ENCODE measurements at regions of chr19 and their contacts with region 1.

Region 1: DNA sequence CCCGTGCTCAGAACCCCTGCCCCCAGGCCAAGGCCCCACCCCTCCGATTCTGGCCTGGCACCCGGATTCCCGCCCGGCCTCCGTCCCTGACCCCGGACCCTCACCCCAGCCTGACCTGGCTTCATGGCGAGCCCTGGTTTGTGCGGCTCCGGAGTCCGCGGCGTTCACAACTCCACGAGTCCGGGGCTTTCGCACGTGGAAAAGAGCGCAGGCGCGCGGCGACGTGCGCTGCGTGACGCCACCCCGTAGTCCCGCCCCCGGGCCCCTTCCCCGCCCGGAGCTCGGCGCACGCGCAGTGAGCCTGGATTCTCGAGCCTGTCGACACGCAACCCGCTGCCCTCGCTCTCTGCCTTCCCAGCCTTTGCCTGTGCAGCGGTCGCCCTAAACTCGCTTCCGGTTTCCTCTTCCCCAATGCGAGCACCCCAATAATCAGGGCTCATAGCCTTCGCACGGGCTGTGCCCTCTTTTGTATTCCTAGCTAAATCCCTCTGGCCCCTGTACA is at the start of gene FBL:
- DNase-seq: peak; percentile 92 to 100 (median 97)
- ATAC-seq: peak; percentile 93 to 94
- H3K4me3 Mint-ChIP-seq: peak within 1 kb of the TSS; percentile 88 to 94 (median 92)
- H3K27ac Mint-ChIP-seq: peak within 1 kb of the TSS; percentile 86 to 99 (median 97)
- H3K4me1 Mint-ChIP-seq: peaks cover 35 to 52% (median 49%) of the 10 kb centered on the region in 4 donors
- H3K27me3 Mint-ChIP-seq: no peaks in the 10 kb centered on the region
- polyA plus RNA-seq, gene FBL: 231 to 246 (median 236) TPM

Region 2: GRCh38 chr19:39759457-39760184 is 86.6 kb before region 1 on chr19:
- POLR2A ChIA-PET with region 1: no interaction called
- DNase-seq: no peak
- ATAC-seq: no peak
- H3K4me3 Mint-ChIP-seq: no peak overlapping the region
- H3K27ac Mint-ChIP-seq: no peak overlapping the region
- H3K4me1 Mint-ChIP-seq: no peaks in the 10 kb centered on the region
- H3K27me3 Mint-ChIP-seq: peaks cover 11 to 40% (median 29%) of the 10 kb centered on the region in 5 donors

Region 3: GRCh38 chr19:39816287-39817048 is 29.8 kb before region 1 on chr19:
- POLR2A ChIA-PET with region 1: no interaction called
- DNase-seq: no peak
- ATAC-seq: no peak
- H3K4me3 Mint-ChIP-seq: no peak overlapping the region
- H3K27ac Mint-ChIP-seq: peak overlapping the region in 4 of 10 donors; percentile 17 to 65 (median 36)
- H3K4me1 Mint-ChIP-seq: peaks cover 12 to 29% (median 19%) of the 10 kb centered on the region in 4 donors
- H3K27me3 Mint-ChIP-seq: no peaks in the 10 kb centered on the region

Region 4: GRCh38 chr19:39833464-39834286 is 12.6 kb before region 1 on chr19 and contains the start of gene DYRK1B:
- POLR2A ChIA-PET with region 1: interaction called, 53 read pairs
- DNase-seq: peak; percentile 95 to 99 (median 98)
- ATAC-seq: peak; percentile 88 to 93
- H3K4me3 Mint-ChIP-seq: peak within 1 kb of the TSS; percentile 68 to 89 (median 84)
- H3K27ac Mint-ChIP-seq: peak within 1 kb of the TSS; percentile 86 to 99 (median 94)
- H3K4me1 Mint-ChIP-seq: peaks cover 19 to 39% (median 28%) of the 10 kb centered on the region in 4 donors
- H3K27me3 Mint-ChIP-seq: no peaks in the 10 kb centered on the region
- polyA plus RNA-seq, gene DYRK1B: 5.2 to 6.2 (median 5.6) TPM

Region 5: DNA sequence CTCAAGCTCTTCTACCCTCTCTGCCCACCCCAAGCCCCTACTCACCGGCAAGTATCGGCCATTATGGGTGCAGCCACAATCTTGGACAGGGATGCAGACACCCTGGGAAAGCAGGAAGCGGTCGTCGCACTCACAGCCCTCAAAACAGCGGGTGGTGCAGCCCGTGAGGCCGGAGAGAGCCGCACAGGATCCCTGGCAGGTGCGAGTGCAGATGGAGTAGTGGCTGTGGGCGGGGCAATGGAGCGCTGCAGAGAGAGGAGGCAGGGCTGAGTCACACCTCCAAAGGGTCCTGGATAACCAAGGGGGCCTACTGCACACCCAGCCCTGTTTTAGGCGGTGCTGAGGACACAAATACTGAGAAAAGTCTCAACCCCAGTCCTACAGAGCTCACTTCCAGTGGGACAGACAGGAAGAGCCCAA is 24.0 kb after region 1 on chr19:
- POLR2A ChIA-PET with region 1: no interaction called
- DNase-seq: no peak
- ATAC-seq: no peak
- H3K4me3 Mint-ChIP-seq: no peak overlapping the region
- H3K27ac Mint-ChIP-seq: peak overlapping the region in 1 of 10 donors; percentile 75
- H3K4me1 Mint-ChIP-seq: peaks cover 0 to 6% (median 0%) of the 10 kb centered on the region in 4 donors
- H3K27me3 Mint-ChIP-seq: no peaks in the 10 kb centered on the region

Measured in naive thymus-derived CD8-positive, alpha-beta T cell (primary cell).